Esophagus muscularis mucosa (tissue), 4 donors: ENCODE measurements at regions of chr7 and their contacts with region 1.

Region 1: DNA sequence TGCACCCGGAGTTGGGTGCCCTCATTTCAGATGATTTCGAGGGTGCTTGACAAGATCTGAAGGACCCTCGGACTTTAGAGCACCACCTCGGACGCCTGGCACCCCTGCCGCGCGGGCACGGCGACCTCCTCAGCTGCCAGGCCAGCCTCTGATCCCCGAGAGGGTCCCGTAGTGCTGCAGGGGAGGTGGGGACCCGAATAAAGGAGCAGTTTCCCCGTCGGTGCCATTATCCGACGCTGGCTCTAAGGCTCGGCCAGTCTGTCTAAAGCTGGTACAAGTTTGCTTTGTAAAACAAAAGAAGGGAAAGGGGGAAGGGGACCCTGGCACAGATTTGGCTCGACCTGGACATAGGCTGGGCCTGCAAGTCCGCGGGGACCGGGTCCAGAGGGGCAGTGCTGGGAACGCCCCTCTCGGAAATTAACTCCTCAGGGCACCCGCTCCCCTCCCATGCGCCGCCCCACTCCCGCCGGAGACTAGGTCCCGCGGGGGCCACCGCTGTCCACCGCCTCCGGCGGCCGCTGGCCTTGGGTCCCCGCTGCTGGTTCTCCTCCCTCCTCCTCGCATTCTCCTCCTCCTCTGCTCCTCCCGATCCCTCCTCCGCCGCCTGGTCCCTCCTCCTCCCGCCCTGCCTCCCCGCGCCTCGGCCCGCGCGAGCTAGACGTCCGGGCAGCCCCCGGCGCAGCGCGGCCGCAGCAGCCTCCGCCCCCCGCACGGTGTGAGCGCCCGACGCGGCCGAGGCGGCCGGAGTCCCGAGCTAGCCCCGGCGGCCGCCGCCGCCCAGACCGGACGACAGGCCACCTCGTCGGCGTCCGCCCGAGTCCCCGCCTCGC is at the start of gene EGFR:
- DNase-seq: peak; percentile 94
- H3K4me3 ChIP-seq: peak within 1 kb of the TSS; percentile 91 to 98 (median 96)
- H3K27ac ChIP-seq: peak within 1 kb of the TSS; percentile 97 to 99 (median 99)
- H3K4me1 ChIP-seq: peaks cover 18 to 43% (median 41%) of the 10 kb centered on the region in 4 donors
- H3K27me3 ChIP-seq: peaks cover 0 to 11% (median 0%) of the 10 kb centered on the region in 4 donors
- CTCF ChIP-seq: no peak
- EP300 ChIP-seq: no peak
- POLR2A ChIP-seq: peak; percentile 11
- total RNA-seq, gene EGFR: 79.3 to 125 (median 110) TPM

Region 2: DNA sequence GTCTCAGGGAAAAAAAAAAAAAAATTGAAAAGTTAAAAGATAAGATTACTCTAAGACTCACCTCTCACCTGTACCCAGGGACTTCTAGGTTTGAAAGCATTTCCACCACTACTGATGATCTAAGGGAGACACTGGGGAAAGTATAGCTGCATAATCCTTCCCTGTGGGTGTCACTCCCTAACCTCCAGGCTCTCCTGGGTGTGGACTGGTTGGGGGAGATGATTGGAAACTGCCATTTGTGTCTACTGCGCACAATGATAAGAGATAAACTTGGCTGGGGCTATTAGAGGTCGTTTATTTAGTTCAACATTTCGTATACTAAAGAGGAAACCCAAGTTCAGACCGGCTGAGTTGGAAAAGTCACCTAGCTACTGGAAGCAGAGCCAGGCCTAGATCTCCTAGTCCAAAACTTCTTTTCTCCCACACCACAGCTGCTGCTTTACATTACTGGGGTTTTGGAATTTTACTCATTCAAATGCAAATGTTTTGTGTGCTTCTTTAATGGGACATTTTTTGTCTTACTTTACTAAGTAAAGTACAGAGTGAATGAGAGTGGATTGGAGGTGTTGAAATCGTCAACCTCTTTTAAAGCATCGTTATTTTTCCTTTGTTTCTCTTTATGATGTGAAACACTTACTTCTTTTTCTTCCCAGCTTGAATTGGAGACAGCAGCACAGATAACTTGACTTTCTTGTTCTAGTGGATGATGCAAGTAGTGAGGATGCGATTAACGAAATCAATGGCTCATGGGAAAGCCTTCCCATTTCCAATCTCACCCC is 237.3 kb before region 1 on chr7:
- intact Hi-C with region 1: loop called (anchors 5 kb)
- DNase-seq: no peak
- H3K4me3 ChIP-seq: no peak overlapping the region
- H3K27ac ChIP-seq: no peak overlapping the region
- H3K4me1 ChIP-seq: no peaks in the 10 kb centered on the region
- H3K27me3 ChIP-seq: no peaks in the 10 kb centered on the region
- CTCF ChIP-seq: no peak
- EP300 ChIP-seq: no peak
- POLR2A ChIP-seq: no peak

Region 3: GRCh38 chr7:54932818-54933543 is 85.6 kb before region 1 on chr7:
- intact Hi-C with region 1: loop called (anchors 10 kb)
- DNase-seq: no peak
- H3K4me3 ChIP-seq: peak overlapping the region; percentile 51 to 65 (median 56)
- H3K27ac ChIP-seq: peak overlapping the region; percentile 74 to 82 (median 78)
- H3K4me1 ChIP-seq: peaks cover 10 to 15% (median 11%) of the 10 kb centered on the region in 4 donors
- H3K27me3 ChIP-seq: no peaks in the 10 kb centered on the region
- CTCF ChIP-seq: peak in 1 of 3 experiments; percentile 7
- EP300 ChIP-seq: no peak
- POLR2A ChIP-seq: no peak

Region 4: DNA sequence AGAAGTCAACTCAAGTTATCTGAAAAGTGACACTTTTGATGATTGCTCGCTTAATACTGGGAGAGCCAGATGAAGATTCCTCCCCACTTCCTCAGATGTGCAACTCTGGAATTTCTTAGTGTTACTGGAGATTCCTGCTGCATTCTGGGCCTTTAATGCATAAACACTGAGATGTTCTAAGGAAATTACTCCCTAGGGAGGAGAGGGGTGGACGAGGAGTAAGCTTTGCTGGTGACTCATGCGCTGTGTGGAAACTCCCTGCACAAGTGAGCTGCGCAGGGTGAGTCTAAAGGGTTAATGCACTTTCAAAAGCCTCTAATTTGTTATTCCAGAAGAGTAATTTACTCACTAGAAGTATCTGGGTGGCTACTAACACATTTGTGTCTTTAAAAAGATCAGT is 46.5 kb after region 1 on chr7:
- intact Hi-C with region 1: loop called (anchors 5 kb)
- DNase-seq: no peak
- H3K4me3 ChIP-seq: peak overlapping the region in 2 of 4 donors; percentile 5 to 18
- H3K27ac ChIP-seq: peak overlapping the region; percentile 81 to 88 (median 87)
- H3K4me1 ChIP-seq: peaks cover 20 to 95% (median 79%) of the 10 kb centered on the region in 4 donors
- H3K27me3 ChIP-seq: no peaks in the 10 kb centered on the region
- CTCF ChIP-seq: no peak
- EP300 ChIP-seq: peak; percentile 21
- POLR2A ChIP-seq: no peak

Region 5: GRCh38 chr7:55132890-55133551 is 114.4 kb after region 1 on chr7:
- intact Hi-C with region 1: loop called (anchors 2 kb)
- DNase-seq: no peak
- H3K4me3 ChIP-seq: no peak overlapping the region
- H3K27ac ChIP-seq: peak overlapping the region; percentile 87 to 94 (median 90)
- H3K4me1 ChIP-seq: peaks cover 63 to 68% (median 66%) of the 10 kb centered on the region in 4 donors
- H3K27me3 ChIP-seq: no peaks in the 10 kb centered on the region
- CTCF ChIP-seq: no peak
- EP300 ChIP-seq: peak; percentile 83
- POLR2A ChIP-seq: no peak

Region 6: GRCh38 chr7:55192718-55193117 is 174.1 kb after region 1 on chr7:
- intact Hi-C with region 1: loop called (anchors 10 kb)
- DNase-seq: no peak
- H3K4me3 ChIP-seq: no peak overlapping the region
- H3K27ac ChIP-seq: peak overlapping the region; percentile 57 to 72 (median 60)
- H3K4me1 ChIP-seq: peaks cover 26 to 61% (median 52%) of the 10 kb centered on the region in 4 donors
- H3K27me3 ChIP-seq: no peaks in the 10 kb centered on the region
- CTCF ChIP-seq: no peak
- EP300 ChIP-seq: no peak
- POLR2A ChIP-seq: no peak

Region 7: GRCh38 chr7:55255496-55256435 is 237.2 kb after region 1 on chr7:
- intact Hi-C with region 1: loop called (anchors 2 kb)
- DNase-seq: no peak
- H3K4me3 ChIP-seq: peak overlapping the region; percentile 65 to 78 (median 70)
- H3K27ac ChIP-seq: peak overlapping the region; percentile 55 to 77 (median 72)
- H3K4me1 ChIP-seq: peaks cover 17 to 21% (median 19%) of the 10 kb centered on the region in 4 donors
- H3K27me3 ChIP-seq: peaks cover 0 to 24% (median 0%) of the 10 kb centered on the region in 4 donors
- CTCF ChIP-seq: peak; percentile 87 to 93 (median 92)
- EP300 ChIP-seq: no peak
- POLR2A ChIP-seq: no peak

Region 8: GRCh38 chr7:55657654-55658053 is 639.1 kb after region 1 on chr7:
- intact Hi-C with region 1: no loop called
- DNase-seq: no peak
- H3K4me3 ChIP-seq: no peak overlapping the region
- H3K27ac ChIP-seq: no peak overlapping the region
- H3K4me1 ChIP-seq: no peaks in the 10 kb centered on the region
- H3K27me3 ChIP-seq: peaks cover 0 to 8% (median 0%) of the 10 kb centered on the region in 4 donors
- CTCF ChIP-seq: no peak
- EP300 ChIP-seq: no peak
- POLR2A ChIP-seq: no peak